Testis (tissue), 5 donors: ENCODE measurements at regions of chr5 and their contacts with region 1.

Region 1: GRCh38 chr5:5139777-5140478 is at the start of gene ADAMTS16:
- DNase-seq: no peak
- H3K4me3 ChIP-seq: peak within 1 kb of the TSS in 1 of 2 donors; percentile 53
- H3K27ac ChIP-seq: no peak within 1 kb of the TSS
- H3K4me1 ChIP-seq: peaks cover 7% of the 10 kb centered on the region
- H3K27me3 ChIP-seq: no peaks in the 10 kb centered on the region
- CTCF ChIP-seq: no peak
- POLR2A ChIP-seq: no peak
- total RNA-seq, gene ADAMTS16: 0.16 to 0.37 TPM

Region 2: DNA sequence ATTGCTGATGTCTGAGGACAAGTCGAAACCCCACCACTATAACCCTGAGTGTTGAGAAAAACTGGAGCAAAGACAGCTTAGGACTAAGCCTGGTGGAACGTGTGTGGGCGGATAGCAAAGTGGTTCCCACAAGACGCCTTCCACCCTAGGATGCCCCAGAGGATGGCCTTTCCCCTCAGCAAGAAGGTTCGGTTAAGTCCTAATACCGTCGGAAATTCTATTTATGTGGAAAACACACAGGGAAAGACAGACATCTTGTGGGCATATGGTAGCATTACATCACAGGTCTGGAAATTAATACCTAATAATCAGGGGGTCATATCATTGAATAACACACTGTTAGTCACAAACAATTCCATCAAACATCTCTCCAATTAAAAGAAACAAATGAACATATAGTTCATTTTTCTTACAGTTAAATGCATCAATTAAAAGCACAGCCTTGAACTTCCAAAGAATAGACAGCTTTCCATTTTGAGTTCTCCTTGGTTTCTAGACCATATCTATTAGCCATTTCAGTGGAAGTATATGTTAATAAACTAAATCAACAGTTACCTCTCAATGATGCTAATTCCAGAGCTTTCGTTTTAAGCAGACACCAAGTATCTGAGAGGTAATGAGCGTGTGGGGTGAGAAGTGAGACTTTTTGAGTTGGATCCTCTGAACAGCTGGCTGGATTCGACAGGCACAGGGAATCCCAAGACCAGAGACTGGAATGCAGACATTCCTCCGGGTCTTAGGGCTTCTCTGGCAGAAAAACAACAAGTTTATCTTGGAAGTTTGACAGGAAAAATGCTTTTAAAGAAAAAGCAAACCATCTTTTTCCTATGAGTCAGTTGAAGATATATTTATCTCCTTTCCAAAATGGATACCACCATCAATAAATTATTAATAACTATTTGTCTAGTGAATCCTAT is 279.6 kb after region 1 on chr5:
- intact Hi-C with region 1: loop called (anchors 10 kb)
- DNase-seq: no peak
- H3K4me3 ChIP-seq: no peak overlapping the region
- H3K27ac ChIP-seq: no peak overlapping the region
- H3K4me1 ChIP-seq: peaks cover 18% of the 10 kb centered on the region
- H3K27me3 ChIP-seq: no peaks in the 10 kb centered on the region
- CTCF ChIP-seq: peak; percentile 60 to 73 (median 71)
- POLR2A ChIP-seq: no peak